ENCODE measurements at regions of chr6 and their contacts with region 1.

Region 1: GRCh38 chr6:47097092-47097945 is 55.2 kb upstream of the ADGRF1 start:
- DNase-seq: peak; percentile 78
- H3K4me3 Mint-ChIP-seq: no peak overlapping the region
- H3K27ac Mint-ChIP-seq: peak overlapping the region; percentile 37
- H3K4me1 Mint-ChIP-seq: peaks cover 63% of the 10 kb centered on the region
- H3K27me3 Mint-ChIP-seq: no peaks in the 10 kb centered on the region
- CTCF ChIP-seq: peak; percentile 64

Region 2: DNA sequence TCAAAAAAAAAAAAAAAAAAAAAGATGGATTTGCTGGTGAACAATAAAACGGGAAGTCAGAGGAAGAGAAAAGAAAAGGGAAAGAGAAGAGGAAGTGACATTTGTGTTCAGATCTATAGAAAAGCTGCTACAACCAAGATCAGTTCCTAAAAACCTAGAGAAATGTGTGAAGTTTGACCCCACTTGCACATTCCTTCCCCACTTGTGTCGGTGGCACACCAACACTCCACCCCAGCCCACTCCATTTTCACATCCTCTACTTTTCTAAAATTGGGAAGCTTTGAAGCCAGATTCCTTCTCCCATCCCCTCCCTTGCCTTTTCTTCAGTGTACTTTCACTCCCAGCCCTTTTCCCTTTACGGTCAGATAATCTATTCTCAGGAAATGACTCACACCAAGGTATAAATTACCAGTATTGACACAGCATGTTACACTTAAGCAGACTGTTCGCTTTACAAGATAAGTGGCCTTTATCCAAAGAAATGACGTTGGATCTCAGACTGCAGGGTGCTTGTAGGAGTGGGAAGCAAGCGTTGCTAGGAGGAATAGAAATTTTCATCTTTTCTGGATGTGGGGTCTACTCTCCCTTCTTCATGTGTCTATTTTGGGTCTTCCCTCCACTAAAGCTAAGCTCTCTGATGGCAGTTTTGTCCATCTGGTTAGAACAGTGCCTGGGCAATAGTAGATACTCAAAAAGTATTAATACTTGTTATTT is 37.3 kb after region 1 on chr6:
- CTCF ChIA-PET with region 1: no interaction called
- intact Hi-C with region 1: loop called (anchors 2 kb)
- DNase-seq: peak; percentile 52
- H3K4me3 Mint-ChIP-seq: peak overlapping the region; percentile 18
- H3K27ac Mint-ChIP-seq: peak overlapping the region; percentile 94
- H3K4me1 Mint-ChIP-seq: peaks cover 81% of the 10 kb centered on the region
- H3K27me3 Mint-ChIP-seq: no peaks in the 10 kb centered on the region
- CTCF ChIP-seq: no peak

Region 3: DNA sequence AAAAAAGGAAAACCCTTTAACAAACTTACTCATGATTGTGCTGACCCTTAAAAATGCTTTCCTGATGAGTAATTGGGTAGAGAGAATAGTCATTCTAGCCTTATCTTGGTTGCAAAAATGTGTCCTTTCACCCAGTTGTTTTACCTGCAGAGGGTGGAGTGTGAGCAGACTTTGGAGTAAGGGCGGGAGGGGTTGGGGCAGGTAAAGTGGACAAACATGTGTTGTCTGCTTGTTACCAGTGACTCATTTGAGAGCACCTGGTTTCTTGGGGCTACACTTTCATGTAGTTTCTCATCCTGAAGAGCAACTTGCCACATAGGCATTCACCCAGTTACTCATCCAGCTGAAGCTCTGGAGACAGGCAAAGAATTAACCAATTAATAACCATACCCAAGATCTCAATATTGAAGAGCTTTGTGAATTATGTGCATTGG is 91.3 kb after region 1 on chr6:
- CTCF ChIA-PET with region 1: no interaction called
- intact Hi-C with region 1: loop called (anchors 2 kb)
- DNase-seq: peak; percentile 72
- H3K4me3 Mint-ChIP-seq: peak overlapping the region; percentile 9
- H3K27ac Mint-ChIP-seq: peak overlapping the region; percentile 71
- H3K4me1 Mint-ChIP-seq: peaks cover 45% of the 10 kb centered on the region
- H3K27me3 Mint-ChIP-seq: no peaks in the 10 kb centered on the region
- CTCF ChIP-seq: no peak

Region 4: DNA sequence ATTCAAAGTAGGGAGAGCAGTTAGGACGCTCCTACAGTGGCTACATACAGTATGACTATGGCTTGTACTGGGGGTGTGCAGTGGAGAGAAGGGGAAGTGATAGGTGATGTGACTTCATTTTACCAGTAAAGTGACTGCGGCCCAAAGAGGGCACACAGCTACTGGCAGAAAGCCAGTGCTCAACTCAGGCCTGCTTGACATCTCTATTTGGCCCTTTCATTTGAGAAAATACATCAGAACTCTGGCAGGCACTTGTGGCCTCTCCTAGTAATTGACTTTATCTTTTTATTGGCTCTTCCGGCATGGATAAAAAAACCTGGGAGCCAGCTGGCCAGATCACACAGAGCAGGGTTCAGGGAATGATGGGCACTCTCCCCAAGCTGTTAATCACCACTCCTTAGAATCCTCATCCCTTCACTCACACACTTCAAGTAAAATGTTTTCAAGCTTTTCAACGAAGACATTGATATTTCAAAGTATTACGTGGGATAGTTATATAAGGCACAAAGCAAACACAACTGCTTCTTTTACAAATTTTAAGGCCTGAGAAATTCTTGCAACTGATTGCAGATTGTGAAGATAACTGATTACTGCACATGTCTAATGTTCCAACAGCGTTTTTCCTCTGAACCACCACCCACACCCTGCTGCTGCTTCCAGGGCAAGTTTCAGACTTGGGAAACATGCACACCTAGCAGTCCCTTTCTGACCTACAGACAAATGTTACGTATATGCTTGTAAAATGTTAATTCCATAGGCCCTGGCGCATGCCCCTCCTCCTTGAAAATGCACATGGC is 138.8 kb after region 1 on chr6:
- CTCF ChIA-PET with region 1: no interaction called
- intact Hi-C with region 1: loop called (anchors 2 kb)
- DNase-seq: no peak
- H3K4me3 Mint-ChIP-seq: peak overlapping the region; percentile 68
- H3K27ac Mint-ChIP-seq: peak overlapping the region; percentile 91
- H3K4me1 Mint-ChIP-seq: peaks cover 62% of the 10 kb centered on the region
- H3K27me3 Mint-ChIP-seq: no peaks in the 10 kb centered on the region
- CTCF ChIP-seq: no peak

Region 5: DNA sequence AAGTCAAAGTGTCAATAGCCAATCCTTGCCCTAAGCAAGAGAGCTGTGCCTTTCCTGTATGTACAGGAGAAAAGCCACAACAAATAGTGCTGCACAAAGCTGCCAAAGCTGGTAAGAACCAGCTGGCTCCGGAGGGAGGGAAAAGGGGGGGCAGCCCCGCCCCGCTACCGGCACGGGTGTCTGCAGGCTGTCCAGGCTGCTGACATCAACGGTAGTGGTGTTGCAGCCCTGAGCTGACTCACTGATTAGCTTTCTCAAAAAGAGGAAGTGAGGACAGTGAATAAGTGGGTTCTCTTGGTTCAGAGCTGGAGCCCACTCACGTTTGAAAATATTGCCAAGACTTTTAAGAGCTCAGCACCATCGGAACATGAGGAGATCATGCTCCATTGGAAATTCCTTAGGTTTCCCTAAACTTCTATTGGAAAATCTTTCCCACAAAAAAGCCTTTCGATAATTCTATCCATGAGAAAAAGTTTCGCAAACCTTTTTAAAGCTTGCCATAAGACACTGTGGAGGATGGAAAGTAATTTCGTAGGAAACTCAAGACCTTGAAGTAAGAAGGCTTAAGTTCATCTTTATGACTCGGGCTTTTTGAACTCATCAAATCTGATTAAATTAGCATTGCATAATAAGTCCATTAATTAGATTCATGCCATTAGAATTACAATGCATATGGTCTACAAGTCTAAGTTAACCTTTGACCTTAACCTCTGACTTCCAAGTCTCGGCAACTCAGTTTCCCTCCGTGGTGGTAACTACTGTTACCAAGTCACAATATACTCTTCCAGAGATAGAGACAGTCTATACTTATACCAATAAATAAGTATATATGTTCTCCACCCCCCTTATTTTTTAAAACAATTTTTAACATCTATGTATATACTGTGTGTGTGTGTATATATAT is 145.4 kb after region 1 on chr6:
- CTCF ChIA-PET with region 1: interaction called, 11 read pairs
- intact Hi-C with region 1: no loop called
- DNase-seq: peak; percentile 93
- H3K4me3 Mint-ChIP-seq: peak overlapping the region; percentile 53
- H3K27ac Mint-ChIP-seq: peak overlapping the region; percentile 85
- H3K4me1 Mint-ChIP-seq: peaks cover 74% of the 10 kb centered on the region
- H3K27me3 Mint-ChIP-seq: no peaks in the 10 kb centered on the region
- CTCF ChIP-seq: no peak

Region 6: DNA sequence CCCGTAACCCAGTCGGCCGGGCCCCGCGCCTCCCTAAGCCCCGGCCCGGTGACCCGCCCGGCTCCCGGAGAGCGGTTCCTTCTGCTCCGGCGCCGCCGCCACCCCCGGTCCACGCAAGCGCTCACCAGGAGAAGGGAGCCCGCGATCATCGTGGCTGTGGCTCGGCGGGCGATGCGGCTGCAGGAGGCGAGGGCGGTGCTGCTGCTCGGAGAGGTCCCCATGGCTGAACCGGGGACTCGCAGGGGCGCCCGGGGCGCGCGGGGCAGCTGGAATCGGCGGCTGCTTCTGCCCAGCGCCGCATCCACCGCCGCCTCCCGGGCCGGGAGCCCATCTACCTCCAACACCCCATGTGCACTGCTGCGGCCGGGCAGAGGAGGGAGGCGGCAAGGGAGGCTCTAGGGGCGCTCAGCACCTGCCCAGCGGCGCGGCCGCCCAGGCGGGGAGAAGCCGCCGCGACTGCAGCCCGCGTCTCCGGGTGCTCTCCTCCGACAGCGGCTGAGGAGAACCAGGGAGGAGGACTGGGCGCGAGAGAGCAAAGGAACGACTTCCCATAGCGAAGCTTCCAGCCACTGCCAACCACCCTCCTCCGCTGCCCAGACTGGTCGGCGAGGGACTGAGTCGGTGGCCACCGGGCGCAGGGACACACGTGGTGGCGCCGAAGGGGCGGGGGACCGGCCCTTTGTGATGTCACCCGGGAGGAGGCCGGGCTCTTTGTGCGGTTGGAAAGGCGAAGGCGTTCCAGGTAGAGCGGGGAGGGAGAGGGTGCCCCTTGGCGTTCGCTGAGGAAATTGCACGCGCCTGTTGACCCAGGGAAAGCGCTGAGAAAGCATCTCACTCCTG is 212.2 kb after region 1 on chr6 and contains the start of gene TNFRSF21:
- CTCF ChIA-PET with region 1: interaction called, 4 read pairs
- intact Hi-C with region 1: loop called (anchors 1 kb)
- DNase-seq: peak; percentile 97
- H3K4me3 Mint-ChIP-seq: peak within 1 kb of the TSS; percentile 98
- H3K27ac Mint-ChIP-seq: peak within 1 kb of the TSS; percentile 96
- H3K4me1 Mint-ChIP-seq: peaks cover 31% of the 10 kb centered on the region
- H3K27me3 Mint-ChIP-seq: no peaks in the 10 kb centered on the region
- CTCF ChIP-seq: peak; percentile 85
- total RNA-seq, gene TNFRSF21: 255 and 282 TPM in 2 replicates

Region 7: GRCh38 chr6:47407348-47408281 is 310.3 kb after region 1 on chr6:
- CTCF ChIA-PET with region 1: interaction called, 4 read pairs
- intact Hi-C with region 1: loop called (anchors 5 kb)
- DNase-seq: no peak
- H3K4me3 Mint-ChIP-seq: peak overlapping the region; percentile 32
- H3K27ac Mint-ChIP-seq: peak overlapping the region; percentile 91
- H3K4me1 Mint-ChIP-seq: peaks cover 28% of the 10 kb centered on the region
- H3K27me3 Mint-ChIP-seq: no peaks in the 10 kb centered on the region
- CTCF ChIP-seq: no peak

Measured in Calu3 (cell line).